Head of caudate nucleus (tissue), 42 donors: ENCODE measurements at regions of chr19 and their contacts with region 1.

Region 1: GRCh38 chr19:49937750-49938381 is 8.6 kb upstream of the NUP62 start:
- DNase-seq: peak; percentile 57 to 93 (median 82)

Region 2: DNA sequence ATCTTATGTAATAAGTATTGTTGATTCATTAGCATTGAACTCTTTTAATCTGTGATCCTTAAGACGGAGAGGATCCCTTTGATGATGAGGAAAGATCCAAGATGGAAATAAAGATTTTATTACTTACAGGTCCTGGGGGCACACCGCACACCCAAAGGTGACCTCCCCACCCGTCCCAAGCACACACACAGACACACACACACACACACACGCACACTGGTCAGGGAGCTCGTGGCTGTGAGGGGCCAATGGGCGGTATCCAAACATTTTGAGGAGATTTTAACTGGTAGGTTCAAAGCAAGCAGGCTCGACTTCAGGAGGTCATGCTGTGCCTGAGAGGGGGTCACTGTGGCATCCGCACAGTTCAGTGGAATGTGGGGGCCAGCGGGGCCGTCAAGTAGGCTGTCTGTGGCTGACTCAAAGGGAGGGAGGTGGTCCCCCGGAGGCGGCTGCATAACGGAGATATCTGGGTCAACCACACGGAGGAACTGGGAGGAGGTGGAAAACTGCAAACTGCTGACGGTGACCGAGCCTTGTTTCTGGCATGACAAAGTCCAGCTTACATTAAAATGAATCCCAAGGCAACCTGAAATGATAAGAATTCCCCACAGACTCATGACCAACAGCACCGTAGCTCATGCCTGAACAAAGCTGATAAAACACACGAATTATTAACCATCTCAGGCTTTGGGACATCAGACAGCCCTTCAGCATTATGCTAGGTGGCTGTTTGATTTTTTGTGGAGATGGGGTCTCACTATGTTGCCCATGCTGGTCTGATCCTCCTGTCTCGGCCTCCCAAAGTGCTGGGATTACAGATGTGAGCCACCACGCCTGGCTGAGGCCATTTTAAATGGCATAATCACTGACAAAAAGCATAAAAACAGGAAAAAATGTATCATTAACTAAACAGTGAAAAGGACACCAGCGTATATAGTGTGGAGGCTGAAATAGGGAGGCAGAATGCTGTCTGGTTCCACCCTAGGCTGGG is 44.0 kb after region 1 on chr19:
- intact Hi-C with region 1: loop called (anchors 2 kb)
- DNase-seq: no peak